Left colon (tissue), 2 donors: ENCODE measurements at regions of chr12 and their contacts with region 1.

Region 1: GRCh38 chr12:110431957-110432587 is 18.1 kb downstream of the ARPC3 start:
- DNase-seq: peak in 1 of 2 donors; percentile 26
- ATAC-seq: no peak

Region 2: DNA sequence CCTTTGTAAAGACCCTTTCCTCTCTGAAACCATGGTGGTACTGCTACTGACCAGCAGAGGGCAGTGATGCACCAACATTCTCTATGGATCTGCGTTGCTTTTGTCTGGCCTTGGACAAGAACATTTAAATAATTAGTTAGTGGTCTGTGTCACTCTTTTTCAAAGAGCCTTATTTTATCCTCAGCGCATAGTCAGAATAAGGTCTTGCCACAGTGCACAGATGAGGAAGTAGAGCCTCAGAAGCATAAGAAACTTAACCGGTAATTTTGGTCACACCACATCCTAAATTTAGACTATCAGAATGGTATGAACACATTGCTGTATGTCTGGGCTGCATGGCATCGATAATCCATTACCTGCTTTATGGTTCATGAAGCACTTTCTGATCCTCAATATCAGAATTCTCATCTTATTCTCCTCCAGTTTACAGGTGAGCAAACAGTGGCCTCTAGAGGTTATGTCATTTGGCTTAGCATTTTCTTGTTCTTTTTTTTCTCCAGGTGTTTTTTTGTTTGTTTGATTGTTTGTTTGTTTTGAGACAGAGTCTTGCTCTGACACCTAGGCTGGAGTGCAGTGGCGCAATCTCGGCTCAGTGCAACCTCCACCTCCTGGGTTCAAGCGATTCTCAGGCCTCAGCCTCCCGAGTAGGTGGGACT is 331.6 kb before region 1 on chr12:
- intact Hi-C with region 1: loop called in 1 of 2 experiments (anchors 5 kb)
- DNase-seq: peak; percentile 31 to 75
- ATAC-seq: peak; percentile 79

Region 3: DNA sequence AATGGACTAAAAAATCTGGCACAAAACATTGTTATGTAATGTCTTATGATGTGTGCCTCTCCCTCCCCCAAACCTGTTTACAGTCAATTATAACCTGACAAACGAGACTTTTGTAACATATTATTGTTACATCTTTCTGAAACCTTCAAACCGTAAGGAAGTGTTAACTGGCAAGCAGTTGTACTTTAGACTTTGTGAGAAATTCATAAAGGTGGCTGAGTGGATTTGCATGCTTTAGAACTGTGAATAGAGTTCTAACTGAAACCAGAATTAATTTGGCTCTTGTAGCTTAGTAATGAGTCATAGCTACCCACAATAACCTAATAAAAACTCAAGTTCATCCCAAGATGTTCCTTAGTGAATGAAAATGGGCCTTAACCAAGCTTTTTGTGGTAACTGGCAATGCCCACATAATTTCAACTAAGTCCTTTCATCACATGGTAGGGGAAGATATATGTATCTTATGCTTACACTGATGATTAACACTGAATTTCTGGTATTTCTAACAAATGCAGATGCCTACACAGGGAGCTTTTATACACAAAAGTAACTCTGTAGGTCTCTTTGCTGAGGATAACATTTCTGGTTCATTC is 99.8 kb after region 1 on chr12:
- intact Hi-C with region 1: no loop called
- DNase-seq: no peak
- ATAC-seq: peak; percentile 82